Ovary (tissue), 10 donors: ENCODE measurements at regions of chr16 and their contacts with region 1.

Region 1: GRCh38 chr16:106623-107324 is 28.7 kb downstream of the MPG start:
- DNase-seq: peak in 3 of 5 donors; percentile 49 to 67 (median 56)
- H3K4me3 ChIP-seq: no peak overlapping the region
- H3K27ac ChIP-seq: no peak overlapping the region
- H3K4me1 ChIP-seq: peaks cover 10% of the 10 kb centered on the region
- H3K27me3 ChIP-seq: no peaks in the 10 kb centered on the region
- CTCF ChIP-seq: peak; percentile 73 to 79 (median 74)
- EP300 ChIP-seq: no peak
- POLR2A ChIP-seq: no peak

Region 2: GRCh38 chr16:180938-181667 is 74.3 kb after region 1 on chr16:
- intact Hi-C with region 1: loop called in 2 of 4 experiments (anchors 2 to 5 kb)
- DNase-seq: peak; percentile 66 to 87 (median 80)
- H3K4me3 ChIP-seq: peak overlapping the region; percentile 11
- H3K27ac ChIP-seq: no peak overlapping the region
- H3K4me1 ChIP-seq: peaks cover 8% of the 10 kb centered on the region
- H3K27me3 ChIP-seq: no peaks in the 10 kb centered on the region
- CTCF ChIP-seq: peak; percentile 91 to 94 (median 94)
- EP300 ChIP-seq: no peak
- POLR2A ChIP-seq: no peak

Region 3: DNA sequence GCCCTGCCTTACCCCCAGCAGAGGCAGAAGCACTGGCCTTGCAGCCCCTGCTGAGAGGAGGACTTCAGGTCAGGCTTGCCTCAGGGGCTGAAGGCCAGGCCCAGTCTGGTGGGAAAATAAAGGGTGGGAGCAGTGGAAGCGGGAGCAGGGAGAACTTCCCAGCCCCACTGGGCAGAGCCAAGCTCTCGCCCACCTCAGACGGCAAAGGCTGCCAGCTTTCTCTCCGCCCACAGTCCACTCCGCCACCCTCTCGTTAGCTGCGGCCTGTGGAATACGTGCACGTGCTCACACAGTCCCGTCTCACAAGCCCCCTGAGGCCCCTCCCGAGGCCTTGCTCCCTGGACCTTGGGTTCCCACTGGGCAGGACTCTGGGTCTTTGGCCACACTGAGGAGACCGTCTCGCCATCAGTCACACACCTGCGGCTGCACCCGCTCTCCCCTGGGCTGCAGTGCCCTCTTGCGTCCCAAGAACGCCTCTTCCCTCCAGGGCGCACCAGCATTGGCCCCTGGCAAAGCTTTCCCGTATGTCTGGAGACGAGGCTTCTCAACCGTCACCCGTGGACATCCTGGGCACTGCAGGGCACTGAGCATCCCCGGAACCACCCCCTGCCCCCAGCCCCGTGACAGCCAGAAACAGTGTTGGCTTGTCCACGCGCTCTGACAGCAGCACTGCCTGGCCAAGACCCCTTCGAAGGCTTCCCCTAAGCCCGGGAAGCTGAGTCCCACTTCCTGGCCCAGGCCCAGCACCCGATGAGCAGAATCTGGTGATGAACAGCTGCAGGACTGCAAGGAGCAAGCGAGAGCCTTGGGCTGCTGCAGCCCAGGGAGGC is 255.3 kb after region 1 on chr16:
- intact Hi-C with region 1: loop called in 1 of 4 experiments (anchors 5 kb)
- DNase-seq: peak; percentile 61 to 78 (median 72)
- H3K4me3 ChIP-seq: no peak overlapping the region
- H3K27ac ChIP-seq: no peak overlapping the region
- H3K4me1 ChIP-seq: no peaks in the 10 kb centered on the region
- H3K27me3 ChIP-seq: no peaks in the 10 kb centered on the region
- CTCF ChIP-seq: peak in 2 of 3 donors; percentile 37 to 51
- EP300 ChIP-seq: no peak
- POLR2A ChIP-seq: no peak